ENCODE measurements at regions of chr15 and their contacts with region 1.

Region 1: DNA sequence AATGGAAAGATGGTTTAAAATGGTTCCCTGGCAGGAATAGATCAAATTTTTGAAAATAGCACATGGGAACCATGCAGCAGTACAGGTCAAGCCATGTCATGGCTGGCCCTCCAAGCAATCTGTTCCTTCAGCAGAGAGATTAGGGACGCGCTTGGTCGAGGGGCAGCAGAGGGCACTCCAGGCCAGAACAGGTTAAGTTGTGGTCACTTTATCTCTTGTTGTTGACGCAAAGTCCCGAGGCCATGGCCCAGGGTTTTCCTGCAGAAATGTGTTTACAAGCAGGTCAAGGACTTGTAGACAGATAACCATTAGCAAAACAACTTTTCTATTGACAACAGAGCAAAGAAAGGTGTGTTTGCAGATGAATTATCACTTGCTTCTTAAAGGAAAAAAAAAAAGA is 570.0 kb upstream of the NR2F2 start:
- DNase-seq: peak; percentile 30
- ATAC-seq: peak; percentile 94
- H3K4me3 ChIP-seq: no peak overlapping the region
- H3K27ac ChIP-seq: no peak overlapping the region
- H3K4me1 ChIP-seq: no peaks in the 10 kb centered on the region
- H3K27me3 ChIP-seq: no peaks in the 10 kb centered on the region
- CTCF ChIP-seq: peak; percentile 76
- EP300 ChIP-seq: peak in 1 of 2 experiments; percentile 23; a peak in 1 of 4 replicates
- POLR2A ChIP-seq: no peak
- RAD21 ChIP-seq: peak; percentile 35; the same call in 1 of the 2 replicates

Region 2: DNA sequence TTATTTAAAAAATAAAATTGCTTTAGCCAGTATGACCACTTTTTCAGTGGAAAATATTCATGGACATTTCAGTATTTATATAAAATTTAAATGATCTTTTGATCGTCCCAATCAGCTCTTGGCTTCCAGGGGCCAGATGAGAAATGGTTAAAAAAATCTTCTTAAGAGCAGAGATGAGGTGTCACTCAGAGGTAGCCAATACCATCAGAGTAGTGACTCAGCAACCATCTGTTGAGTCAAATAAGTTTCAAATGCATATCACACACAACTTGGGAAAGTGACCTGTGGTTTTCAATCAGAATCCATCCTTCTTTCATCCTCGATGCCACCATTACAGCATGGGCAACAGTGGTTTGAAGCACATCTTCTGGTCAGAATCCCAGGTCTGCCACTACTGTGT is 388.8 kb before region 1 on chr15:
- CTCF ChIA-PET with region 1: no interaction called
- POLR2A ChIA-PET with region 1: no interaction called
- in situ Hi-C with region 1: no loop called
- intact Hi-C with region 1: no loop called
- DNase-seq: no peak
- ATAC-seq: no peak
- H3K4me3 ChIP-seq: no peak overlapping the region
- H3K27ac ChIP-seq: no peak overlapping the region
- H3K4me1 ChIP-seq: no peaks in the 10 kb centered on the region
- H3K27me3 ChIP-seq: no peaks in the 10 kb centered on the region
- CTCF ChIP-seq: no peak
- EP300 ChIP-seq: no peak
- POLR2A ChIP-seq: no peak
- RAD21 ChIP-seq: no peak

Region 3: DNA sequence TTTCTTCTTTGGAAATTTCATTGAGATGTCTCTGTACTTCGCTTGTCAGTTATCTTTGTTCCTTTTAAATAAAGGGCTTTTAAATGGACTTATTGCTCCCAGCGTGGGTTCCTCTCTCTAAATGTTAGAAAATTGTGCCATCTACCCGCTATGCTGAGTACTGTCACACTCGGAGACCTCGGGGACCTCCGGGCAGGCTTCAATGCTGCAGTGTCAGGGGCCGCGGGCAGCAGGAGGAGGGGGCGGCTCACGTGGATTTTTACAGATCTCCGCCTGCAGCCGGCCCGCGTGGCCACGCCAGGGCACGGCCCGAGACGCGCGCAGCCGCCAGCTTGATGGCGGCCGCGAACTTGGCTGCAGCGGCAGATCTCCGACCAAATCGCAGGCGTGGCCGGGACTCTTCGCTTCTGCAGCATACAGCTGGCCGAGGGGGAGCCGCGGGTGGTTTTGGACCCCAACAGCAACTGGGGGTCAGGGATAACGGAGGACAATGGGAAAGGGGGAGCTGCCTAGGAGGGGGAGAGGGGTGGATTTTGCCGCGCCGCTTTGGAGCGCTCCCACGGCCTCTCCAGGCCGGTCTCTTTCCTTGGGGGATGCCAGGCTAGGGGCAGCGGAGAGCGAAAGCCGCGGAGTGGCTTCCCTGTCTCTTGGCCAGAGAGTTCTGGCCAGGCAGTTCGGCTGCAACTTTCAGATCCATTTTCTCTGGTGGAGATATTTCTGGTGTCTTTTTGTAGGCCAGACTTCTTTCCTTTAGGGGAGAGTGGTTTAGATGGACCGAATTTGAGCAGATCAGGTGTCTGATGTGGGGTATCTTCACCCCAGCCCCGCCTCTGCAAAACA is 585.3 kb after region 1 on chr15:
- CTCF ChIA-PET with region 1: no interaction called
- POLR2A ChIA-PET with region 1: no interaction called
- in situ Hi-C with region 1: loop called (anchors 25 kb)
- intact Hi-C with region 1: loop called (anchors 5 kb)
- DNase-seq: peak; percentile 47
- ATAC-seq: peak; percentile 82
- H3K4me3 ChIP-seq: no peak overlapping the region
- H3K27ac ChIP-seq: no peak overlapping the region
- H3K4me1 ChIP-seq: peaks cover 14% of the 10 kb centered on the region; the same call in 1 of the 2 replicates
- H3K27me3 ChIP-seq: no peaks in the 10 kb centered on the region
- CTCF ChIP-seq: peak; percentile 48
- EP300 ChIP-seq: no peak
- POLR2A ChIP-seq: no peak
- RAD21 ChIP-seq: peak; percentile 55; the same call in 1 of the 2 replicates

Measured in HepG2 (cell line).